Left cardiac atrium (tissue), 4 donors: ENCODE measurements at regions of chr5 and their contacts with region 1.

Region 1: GRCh38 chr5:56200856-56201666 is 32.1 kb downstream of the ANKRD55 start:
- DNase-seq: peak; percentile 53
- ATAC-seq: peak; percentile 98 to 99

Region 2: GRCh38 chr5:55593115-55593472 is 608.0 kb before region 1 on chr5:
- intact Hi-C with region 1: no loop called
- DNase-seq: no peak
- ATAC-seq: peak in 1 of 2 donors; percentile 14

Region 3: DNA sequence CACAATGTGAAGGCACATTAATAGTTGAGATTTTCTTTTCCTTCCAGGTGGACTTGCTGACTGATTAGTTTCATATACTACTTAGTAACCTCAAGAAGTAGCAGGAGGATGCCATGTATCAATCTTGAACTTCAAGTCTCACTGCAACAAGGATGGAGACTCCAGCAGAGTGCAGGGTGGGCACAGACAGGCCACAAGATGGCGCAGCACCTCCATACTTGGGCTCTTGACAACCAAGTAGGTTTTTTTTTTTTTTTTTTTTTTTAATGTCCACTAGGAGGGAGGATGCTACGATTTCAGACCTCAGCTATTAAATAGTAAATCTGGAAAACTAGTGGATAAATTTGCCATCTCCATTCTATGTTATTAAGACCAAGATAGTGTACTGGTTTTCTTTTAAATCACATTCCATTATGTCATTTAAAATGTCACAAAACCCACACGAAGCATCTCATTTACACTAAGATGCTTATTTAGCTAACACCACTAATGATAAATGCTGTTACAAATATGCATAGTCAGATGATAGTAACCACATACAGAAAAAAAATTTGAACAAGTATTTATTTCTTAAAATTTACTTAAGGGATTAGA is 264.9 kb before region 1 on chr5:
- intact Hi-C with region 1: loop called in 1 of 2 experiments (anchors 5 kb)
- DNase-seq: peak; percentile 83
- ATAC-seq: peak; percentile 80 to 86

Region 4: GRCh38 chr5:55982957-55983381 is 218.1 kb before region 1 on chr5:
- intact Hi-C with region 1: loop called in 1 of 2 experiments (anchors 10 kb)
- DNase-seq: no peak
- ATAC-seq: peak; percentile 42 to 44